Caco-2 (cell line): ENCODE measurements at regions of chr16 and their contacts with region 1.

Region 1: GRCh38 chr16:53549970-53550690 is 47.1 kb upstream of the AKTIP start:
- DNase-seq: peak; percentile 75 to 82
- H3K4me3 ChIP-seq: no peak overlapping the region
- H3K4me3 Mint-ChIP-seq: no peak overlapping the region
- H3K27ac Mint-ChIP-seq: peak overlapping the region; percentile 73
- H3K4me1 ChIP-seq: peaks cover 13% of the 10 kb centered on the region
- H3K4me1 Mint-ChIP-seq: peaks cover 12% of the 10 kb centered on the region
- H3K27me3 ChIP-seq: no peaks in the 10 kb centered on the region
- H3K27me3 Mint-ChIP-seq: no peaks in the 10 kb centered on the region
- CTCF ChIP-seq: peak; percentile 76

Region 2: GRCh38 chr16:53611179-53611696 is 61.1 kb after region 1 on chr16:
- CTCF ChIA-PET with region 1: interaction called, 17 read pairs
- POLR2A ChIA-PET with region 1: no interaction called
- intact Hi-C with region 1: loop called (anchors 2 kb)
- DNase-seq: peak in 1 of 2 experiments; percentile 29
- H3K4me3 ChIP-seq: no peak overlapping the region
- H3K4me3 Mint-ChIP-seq: peak overlapping the region; percentile 54
- H3K27ac Mint-ChIP-seq: peak overlapping the region; percentile 59
- H3K4me1 ChIP-seq: peaks cover 69% of the 10 kb centered on the region
- H3K4me1 Mint-ChIP-seq: peaks cover 52% of the 10 kb centered on the region
- H3K27me3 ChIP-seq: no peaks in the 10 kb centered on the region
- H3K27me3 Mint-ChIP-seq: no peaks in the 10 kb centered on the region
- CTCF ChIP-seq: no peak

Region 3: DNA sequence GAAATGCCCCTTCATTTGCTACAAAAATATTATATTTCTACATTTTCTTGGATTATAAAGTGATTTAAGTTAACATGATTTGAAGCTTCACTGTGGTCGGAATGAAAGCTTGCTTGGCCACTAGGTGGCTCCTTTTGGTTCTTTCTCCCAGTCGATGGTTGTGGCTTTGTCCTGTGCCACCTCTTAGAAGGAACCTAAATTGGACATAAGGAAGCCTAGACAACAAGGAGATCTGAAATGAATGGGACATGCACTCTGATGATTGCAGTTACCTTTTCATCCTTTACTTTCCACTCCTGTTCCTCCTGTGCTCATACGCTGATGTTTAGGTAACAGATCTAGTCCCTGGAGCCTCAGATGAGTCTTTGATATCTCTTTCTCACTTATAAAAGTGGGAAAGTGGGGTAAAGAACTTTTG is 193.0 kb after region 1 on chr16:
- CTCF ChIA-PET with region 1: interaction called, 10 read pairs
- POLR2A ChIA-PET with region 1: no interaction called
- intact Hi-C with region 1: no loop called
- DNase-seq: peak in 1 of 2 experiments; percentile 52
- H3K4me3 ChIP-seq: no peak overlapping the region
- H3K4me3 Mint-ChIP-seq: no peak overlapping the region
- H3K27ac Mint-ChIP-seq: no peak overlapping the region
- H3K4me1 ChIP-seq: peaks cover 19% of the 10 kb centered on the region
- H3K4me1 Mint-ChIP-seq: peaks cover 31% of the 10 kb centered on the region
- H3K27me3 ChIP-seq: no peaks in the 10 kb centered on the region
- H3K27me3 Mint-ChIP-seq: no peaks in the 10 kb centered on the region
- CTCF ChIP-seq: peak; percentile 75 to 78

Region 4: DNA sequence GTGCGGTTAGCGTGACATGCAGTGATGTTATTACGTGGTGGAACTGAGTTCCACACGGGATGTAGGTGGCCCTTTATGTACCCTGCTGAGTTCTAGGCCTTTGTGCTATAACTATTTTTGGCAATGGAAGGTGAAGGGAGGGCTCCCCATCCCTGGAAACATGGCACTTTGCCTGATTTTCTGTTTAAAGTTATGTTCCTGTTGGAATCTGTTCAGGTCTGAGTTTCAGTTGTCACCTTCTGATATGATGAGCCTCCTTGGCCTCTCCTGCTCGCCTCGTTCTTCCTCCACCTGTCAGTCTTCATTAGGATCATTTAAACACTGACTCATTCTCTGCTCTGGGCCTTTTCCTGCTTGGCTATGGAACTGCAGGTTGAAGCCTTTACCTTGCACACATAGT is 354.4 kb after region 1 on chr16:
- CTCF ChIA-PET with region 1: no interaction called
- POLR2A ChIA-PET with region 1: no interaction called
- intact Hi-C with region 1: loop called (anchors 5 kb)
- DNase-seq: no peak
- H3K4me3 ChIP-seq: no peak overlapping the region
- H3K4me3 Mint-ChIP-seq: no peak overlapping the region
- H3K27ac Mint-ChIP-seq: peak overlapping the region; percentile 2
- H3K4me1 ChIP-seq: peaks cover 33% of the 10 kb centered on the region
- H3K4me1 Mint-ChIP-seq: peaks cover 38% of the 10 kb centered on the region
- H3K27me3 ChIP-seq: no peaks in the 10 kb centered on the region
- H3K27me3 Mint-ChIP-seq: no peaks in the 10 kb centered on the region
- CTCF ChIP-seq: no peak

Region 5: DNA sequence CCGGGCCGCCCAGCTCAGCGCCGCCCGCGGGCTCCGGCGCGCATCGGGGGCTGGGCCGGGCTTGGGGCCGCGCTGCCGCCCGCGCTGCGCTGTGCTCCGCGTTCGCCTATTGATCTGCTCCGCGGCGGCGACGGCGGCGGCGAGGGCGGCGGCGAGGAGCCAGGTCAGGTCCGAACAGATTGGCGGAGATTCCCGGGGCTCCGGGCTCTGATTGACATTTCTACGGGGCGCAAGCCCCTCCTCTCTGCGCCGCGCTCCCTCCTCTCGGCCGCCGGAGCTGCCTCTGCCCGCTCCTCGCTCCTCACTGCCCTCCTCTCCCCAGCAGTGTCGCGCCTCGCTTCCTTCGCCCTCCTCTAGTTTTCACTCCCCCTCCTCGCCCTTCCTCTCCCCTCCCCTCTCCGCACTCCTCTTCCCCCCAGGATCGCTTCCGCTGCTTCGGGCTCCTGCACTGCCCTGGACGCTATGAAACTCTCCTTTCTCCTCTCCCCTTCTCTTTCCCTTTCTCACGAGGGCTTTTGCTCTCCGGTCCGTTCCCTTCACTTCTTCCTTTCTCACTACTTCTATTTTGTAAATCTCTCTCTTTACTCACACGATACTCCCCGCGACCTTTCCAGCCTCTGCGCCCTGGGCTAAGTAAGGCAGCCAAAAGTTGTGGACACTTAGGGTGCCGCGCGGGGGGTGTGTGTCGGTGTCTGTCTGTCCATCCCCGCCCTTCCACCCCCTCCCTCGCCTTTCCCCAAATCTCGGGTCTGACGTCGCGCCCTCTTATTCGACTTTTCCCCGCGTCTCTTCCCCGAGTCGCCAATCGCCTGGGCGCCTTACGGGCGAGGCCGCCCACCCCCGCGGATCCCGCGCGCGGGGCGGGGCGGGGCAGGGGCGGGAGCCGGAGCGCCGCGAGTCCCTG is 736.2 kb after region 1 on chr16 and contains the start of gene IRX3:
- CTCF ChIA-PET with region 1: interaction called, 3 read pairs
- POLR2A ChIA-PET with region 1: no interaction called
- intact Hi-C with region 1: loop called (anchors 10 kb)
- DNase-seq: peak; percentile 90 to 95
- H3K4me3 ChIP-seq: peak within 1 kb of the TSS; percentile 83
- H3K4me3 Mint-ChIP-seq: peak within 1 kb of the TSS; percentile 85
- H3K27ac Mint-ChIP-seq: peak within 1 kb of the TSS; percentile 79
- H3K4me1 ChIP-seq: 0 out of 2 replicates have a peak, but pooled peaks cover 5% of the 10 kb centered on the region
- H3K4me1 Mint-ChIP-seq: peaks cover 7% of the 10 kb centered on the region
- H3K27me3 ChIP-seq: no peaks in the 10 kb centered on the region
- H3K27me3 Mint-ChIP-seq: no peaks in the 10 kb centered on the region
- CTCF ChIP-seq: no peak
- total RNA-seq, gene IRX3: 63.2 and 73.3 TPM in 2 replicates